ENCODE measurements at regions of chr3 and their contacts with region 1.

Region 1: GRCh38 chr3:24185738-24186384 is 240.8 kb downstream of the NR1D2 start:
- DNase-seq: peak; percentile 37 to 48
- H3K4me3 ChIP-seq: no peak overlapping the region
- H3K4me3 Mint-ChIP-seq: no peak overlapping the region
- H3K27ac Mint-ChIP-seq: no peak overlapping the region
- H3K4me1 ChIP-seq: peaks cover 16% of the 10 kb centered on the region; the same call in 1 of the 2 replicates
- H3K4me1 Mint-ChIP-seq: peaks cover 7% of the 10 kb centered on the region
- H3K27me3 ChIP-seq: no peaks in the 10 kb centered on the region
- H3K27me3 Mint-ChIP-seq: no peaks in the 10 kb centered on the region
- CTCF ChIP-seq: peak; percentile 48 to 67

Region 2: GRCh38 chr3:24069045-24069444 is 116.8 kb before region 1 on chr3:
- CTCF ChIA-PET with region 1: interaction called, 3 read pairs
- POLR2A ChIA-PET with region 1: no interaction called
- intact Hi-C with region 1: loop called (anchors 1 kb)
- DNase-seq: peak in 1 of 2 experiments; percentile 38
- H3K4me3 ChIP-seq: no peak overlapping the region
- H3K4me3 Mint-ChIP-seq: no peak overlapping the region
- H3K27ac Mint-ChIP-seq: no peak overlapping the region
- H3K4me1 ChIP-seq: no peaks in the 10 kb centered on the region
- H3K4me1 Mint-ChIP-seq: no peaks in the 10 kb centered on the region
- H3K27me3 ChIP-seq: no peaks in the 10 kb centered on the region
- H3K27me3 Mint-ChIP-seq: no peaks in the 10 kb centered on the region
- CTCF ChIP-seq: peak; percentile 38 to 51

Region 3: GRCh38 chr3:24160424-24161095 is 25.3 kb before region 1 on chr3:
- CTCF ChIA-PET with region 1: no interaction called
- POLR2A ChIA-PET with region 1: no interaction called
- intact Hi-C with region 1: no loop called
- DNase-seq: peak in 1 of 2 experiments; percentile 14
- H3K4me3 ChIP-seq: no peak overlapping the region
- H3K4me3 Mint-ChIP-seq: no peak overlapping the region
- H3K27ac Mint-ChIP-seq: no peak overlapping the region
- H3K4me1 ChIP-seq: no peaks in the 10 kb centered on the region
- H3K4me1 Mint-ChIP-seq: peaks cover 5% of the 10 kb centered on the region
- H3K27me3 ChIP-seq: no peaks in the 10 kb centered on the region
- H3K27me3 Mint-ChIP-seq: no peaks in the 10 kb centered on the region
- CTCF ChIP-seq: no peak

Region 4: DNA sequence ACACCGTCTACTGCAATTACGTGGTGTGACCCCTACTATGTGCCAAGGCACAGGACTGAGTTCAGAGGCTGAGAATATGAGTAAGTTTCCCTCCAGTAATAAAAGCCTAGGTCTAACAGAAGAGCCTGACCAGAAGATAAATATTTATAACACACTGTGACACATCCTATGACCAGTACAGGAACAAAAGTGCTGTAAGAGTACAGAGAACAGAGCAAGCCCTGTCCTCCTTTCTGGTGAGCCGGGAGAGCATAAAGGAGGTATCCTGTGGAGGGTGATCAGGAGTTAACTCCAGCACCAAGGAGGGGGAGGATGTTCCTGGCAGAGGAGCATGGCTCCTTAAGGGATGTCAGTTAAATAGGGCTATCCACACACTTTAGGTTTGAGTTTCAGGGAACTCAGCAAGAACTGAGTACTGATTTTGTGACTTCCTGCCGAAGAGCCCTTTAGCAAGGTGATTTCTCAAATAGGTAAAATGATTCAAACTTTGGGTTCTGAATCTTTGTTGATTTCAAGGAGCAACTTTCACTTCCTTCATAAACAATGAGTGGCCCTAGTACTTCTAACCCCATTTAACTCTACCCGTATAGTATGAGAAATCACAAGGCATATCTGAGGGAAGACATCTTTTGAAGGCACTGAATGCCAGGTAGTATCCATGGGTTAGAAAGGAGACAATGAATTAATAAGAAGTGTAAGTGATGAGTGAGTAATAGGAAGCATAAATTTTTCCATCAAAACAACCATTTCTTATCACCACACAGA is 110.8 kb after region 1 on chr3:
- CTCF ChIA-PET with region 1: no interaction called
- POLR2A ChIA-PET with region 1: no interaction called
- intact Hi-C with region 1: no loop called
- DNase-seq: no peak
- H3K4me3 ChIP-seq: no peak overlapping the region
- H3K4me3 Mint-ChIP-seq: no peak overlapping the region
- H3K27ac Mint-ChIP-seq: no peak overlapping the region
- H3K4me1 ChIP-seq: peaks cover 7% of the 10 kb centered on the region; the same call in 1 of the 2 replicates
- H3K4me1 Mint-ChIP-seq: peaks cover 13% of the 10 kb centered on the region
- H3K27me3 ChIP-seq: no peaks in the 10 kb centered on the region
- H3K27me3 Mint-ChIP-seq: no peaks in the 10 kb centered on the region
- CTCF ChIP-seq: no peak

Region 5: DNA sequence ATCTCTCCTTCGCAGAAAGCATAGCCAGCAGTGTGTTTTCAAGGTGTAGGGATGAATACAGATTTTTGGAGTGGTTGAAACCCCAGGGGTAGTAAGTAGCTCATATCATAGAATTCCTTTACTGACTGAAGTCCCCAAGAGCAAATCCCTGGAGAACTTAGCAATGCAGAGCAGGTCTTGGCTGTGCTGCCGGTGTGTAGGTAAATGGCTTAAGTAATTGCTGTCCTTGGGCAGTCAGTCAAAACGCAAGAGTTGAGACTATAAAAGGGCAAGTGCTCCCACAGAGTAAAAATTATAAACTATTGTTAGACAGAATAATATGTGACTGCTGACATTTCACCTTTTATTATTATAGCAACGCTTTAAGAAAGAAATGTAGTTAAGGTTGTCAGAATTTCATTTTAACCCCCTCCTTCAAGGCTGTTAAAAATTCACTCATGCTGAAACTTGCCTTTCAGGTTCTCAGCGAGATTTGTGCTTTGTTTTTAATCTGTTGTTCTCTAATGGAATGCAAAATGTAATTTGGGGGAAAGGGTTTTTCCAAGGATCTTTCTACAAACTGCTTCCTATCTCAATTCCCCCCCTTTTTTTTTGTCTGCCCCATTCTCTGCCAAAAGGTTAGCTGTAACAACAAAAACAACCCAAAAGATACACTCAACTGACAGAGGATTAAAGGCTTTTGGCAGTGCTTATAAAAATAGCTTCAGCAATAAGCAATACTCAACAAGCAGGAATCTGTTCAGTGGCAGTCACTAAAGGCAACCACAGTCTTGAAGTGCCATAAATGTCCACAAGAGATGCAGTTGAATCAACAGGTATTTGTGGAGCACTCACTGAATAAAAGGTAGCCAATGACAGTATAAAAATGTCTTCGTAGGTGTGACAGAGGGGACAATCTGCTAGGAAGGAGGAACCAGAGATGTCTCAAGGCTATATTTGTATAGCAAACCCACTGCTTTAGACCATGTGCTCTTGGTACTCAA is 203.5 kb after region 1 on chr3:
- CTCF ChIA-PET with region 1: no interaction called
- POLR2A ChIA-PET with region 1: no interaction called
- intact Hi-C with region 1: no loop called
- DNase-seq: no peak
- H3K4me3 ChIP-seq: no peak overlapping the region
- H3K4me3 Mint-ChIP-seq: no peak overlapping the region
- H3K27ac Mint-ChIP-seq: no peak overlapping the region
- H3K4me1 ChIP-seq: peaks cover 30% of the 10 kb centered on the region
- H3K4me1 Mint-ChIP-seq: peaks cover 7% of the 10 kb centered on the region
- H3K27me3 ChIP-seq: no peaks in the 10 kb centered on the region
- H3K27me3 Mint-ChIP-seq: no peaks in the 10 kb centered on the region
- CTCF ChIP-seq: no peak

Measured in Caco-2 (cell line).